ENCODE measurements at regions of chr19 and their contacts with region 1.

Region 1: DNA sequence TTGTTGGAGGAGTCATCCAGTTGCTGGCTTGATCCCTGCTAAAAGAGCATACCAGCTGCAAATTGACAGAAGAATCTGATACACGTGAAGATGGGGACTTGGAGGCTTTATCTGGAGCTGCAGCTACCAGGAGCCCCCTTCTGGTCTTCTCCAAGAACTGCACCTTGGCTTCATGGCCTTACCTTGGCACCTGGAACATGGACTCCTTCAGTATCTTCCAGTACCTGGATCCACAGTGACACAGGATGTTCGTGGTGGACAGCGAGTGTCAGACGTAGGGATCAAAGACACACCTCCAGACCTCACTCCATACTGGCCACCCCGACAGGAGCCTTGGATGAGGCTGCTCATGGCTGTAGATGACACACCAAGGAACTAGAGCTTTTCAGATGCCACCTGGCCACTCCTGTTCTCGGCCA is 9.9 kb upstream of the ACSBG2 start:
- DNase-seq: no peak
- H3K4me3 ChIP-seq: no peak overlapping the region
- H3K27me3 ChIP-seq: no peaks in the 10 kb centered on the region
- CTCF ChIP-seq: peak; percentile 93

Region 2: DNA sequence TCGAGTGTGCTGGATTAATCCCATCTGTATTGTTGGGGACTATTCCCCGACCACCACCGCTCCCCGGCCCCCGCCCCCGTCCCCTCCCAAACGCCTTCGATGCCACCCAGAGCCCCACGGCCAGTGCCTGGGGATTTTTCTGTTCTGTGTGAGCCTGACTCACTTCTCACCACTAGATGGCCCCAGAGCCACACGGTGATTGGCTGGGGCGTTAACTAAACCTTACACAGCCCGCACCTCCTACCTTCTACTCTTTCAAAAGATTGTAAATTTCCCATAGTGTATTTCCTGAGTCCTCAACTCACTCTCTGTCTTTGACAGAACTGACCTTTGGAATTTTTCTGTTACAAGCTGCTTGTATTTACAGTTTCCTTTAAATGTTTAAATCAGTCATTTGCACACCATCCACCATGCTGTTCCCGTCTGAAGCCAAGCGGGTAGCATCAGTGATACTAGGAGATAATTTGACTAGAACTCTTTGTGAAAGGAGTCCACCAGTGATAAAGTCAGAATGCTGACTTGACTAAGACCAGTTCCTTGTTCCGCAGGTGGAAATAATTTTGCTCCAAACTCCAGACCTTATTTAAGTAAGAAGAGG is 76.7 kb before region 1 on chr19:
- CTCF ChIA-PET with region 1: interaction called, 140 read pairs
- POLR2A ChIA-PET with region 1: interaction called, 7 read pairs
- DNase-seq: no peak
- H3K4me3 ChIP-seq: no peak overlapping the region
- H3K27me3 ChIP-seq: no peaks in the 10 kb centered on the region
- CTCF ChIP-seq: peak; percentile 92

Region 3: DNA sequence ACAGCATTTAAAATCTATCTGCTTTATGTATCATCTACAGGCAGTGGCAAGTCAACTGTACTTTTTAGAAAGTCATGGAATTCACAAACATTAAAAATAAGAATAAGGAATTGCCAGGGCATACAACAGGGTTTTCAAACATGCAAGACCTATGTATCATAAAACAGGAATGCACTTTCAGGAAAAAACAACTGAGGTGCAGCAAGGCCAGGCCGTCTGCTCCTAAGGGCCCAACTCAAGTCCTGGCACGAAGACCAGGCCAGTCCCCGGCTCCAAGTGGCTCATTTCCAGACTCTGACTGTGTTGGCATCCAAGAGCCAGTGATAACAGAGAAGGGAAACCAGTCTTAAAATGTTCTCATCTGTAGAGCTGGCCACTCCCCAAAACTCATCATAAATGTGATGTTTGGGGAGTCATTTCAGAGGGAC is 22.3 kb before region 1 on chr19:
- CTCF ChIA-PET with region 1: interaction called, 18 read pairs
- POLR2A ChIA-PET with region 1: no interaction called
- DNase-seq: peak; percentile 75
- H3K4me3 ChIP-seq: no peak overlapping the region
- H3K27me3 ChIP-seq: no peaks in the 10 kb centered on the region
- CTCF ChIP-seq: no peak

Region 4: DNA sequence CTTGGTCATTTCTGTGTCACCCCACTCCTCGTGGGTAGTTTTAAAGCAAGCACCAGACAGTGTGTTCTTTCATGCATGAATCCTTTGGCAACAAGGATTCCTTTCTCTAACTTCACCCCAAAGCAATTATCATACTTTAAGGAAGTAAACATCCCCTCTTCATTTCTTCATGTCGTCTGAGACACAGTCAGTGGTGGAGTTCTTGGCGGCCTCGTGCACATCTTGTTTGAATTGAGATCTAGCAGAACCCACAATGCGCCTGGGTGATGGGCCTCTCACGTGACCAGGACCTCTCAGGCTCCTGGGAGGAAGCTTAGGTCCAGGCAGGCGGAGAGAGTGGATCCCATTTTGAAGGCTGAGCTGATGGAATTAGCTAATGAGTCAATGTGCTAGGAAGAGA is 12.5 kb after region 1 on chr19:
- CTCF ChIA-PET with region 1: interaction called, 22 read pairs
- POLR2A ChIA-PET with region 1: no interaction called
- DNase-seq: no peak
- H3K4me3 ChIP-seq: no peak overlapping the region
- H3K27me3 ChIP-seq: no peaks in the 10 kb centered on the region
- CTCF ChIP-seq: no peak

Region 5: GRCh38 chr19:6297202-6297601 is 171.6 kb after region 1 on chr19:
- CTCF ChIA-PET with region 1: interaction called, 17 read pairs
- POLR2A ChIA-PET with region 1: no interaction called
- DNase-seq: no peak
- H3K4me3 ChIP-seq: no peak overlapping the region
- H3K27me3 ChIP-seq: 0 out of 2 replicates have a peak, but pooled peaks cover 2% of the 10 kb centered on the region
- CTCF ChIP-seq: no peak